ENCODE measurements at regions of chr4 and their contacts with region 1.

Region 1: DNA sequence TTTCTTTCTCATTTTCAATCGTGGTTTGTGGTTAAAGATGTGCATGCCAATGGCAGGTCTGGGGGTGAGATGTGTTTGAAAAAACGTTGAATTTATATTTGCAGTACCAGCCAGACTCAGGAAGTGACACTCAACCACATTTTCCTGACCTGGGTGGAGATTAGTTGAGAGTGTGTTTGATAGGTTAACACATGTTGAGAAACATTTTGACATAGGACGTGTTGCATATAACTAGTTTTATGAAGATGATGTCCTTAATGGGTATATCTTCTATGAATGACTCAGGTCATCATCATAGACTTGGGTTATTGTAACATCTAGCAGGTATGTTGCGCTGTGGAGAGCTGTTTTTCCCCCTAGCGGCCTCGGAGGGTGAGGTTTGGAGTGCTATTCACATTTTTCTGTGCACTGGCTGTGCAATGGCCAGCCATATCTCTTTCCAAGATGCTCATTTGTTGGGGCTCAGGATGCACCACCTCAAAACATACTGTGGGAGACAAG is 21.7 kb upstream of the CD38 start:
- DNase-seq: peak; percentile 82
- H3K4me3 Mint-ChIP-seq: peak overlapping the region; percentile 85
- H3K27ac Mint-ChIP-seq: peak overlapping the region; percentile 99
- H3K4me1 Mint-ChIP-seq: peaks cover 71% of the 10 kb centered on the region
- H3K27me3 Mint-ChIP-seq: no peaks in the 10 kb centered on the region

Region 2: GRCh38 chr4:15428611-15429010 is 327.8 kb before region 1 on chr4:
- CTCF ChIA-PET with region 1: no interaction called
- DNase-seq: no peak
- H3K4me3 Mint-ChIP-seq: no peak overlapping the region
- H3K27ac Mint-ChIP-seq: no peak overlapping the region
- H3K4me1 Mint-ChIP-seq: peaks cover 17% of the 10 kb centered on the region
- H3K27me3 Mint-ChIP-seq: no peaks in the 10 kb centered on the region

Region 3: DNA sequence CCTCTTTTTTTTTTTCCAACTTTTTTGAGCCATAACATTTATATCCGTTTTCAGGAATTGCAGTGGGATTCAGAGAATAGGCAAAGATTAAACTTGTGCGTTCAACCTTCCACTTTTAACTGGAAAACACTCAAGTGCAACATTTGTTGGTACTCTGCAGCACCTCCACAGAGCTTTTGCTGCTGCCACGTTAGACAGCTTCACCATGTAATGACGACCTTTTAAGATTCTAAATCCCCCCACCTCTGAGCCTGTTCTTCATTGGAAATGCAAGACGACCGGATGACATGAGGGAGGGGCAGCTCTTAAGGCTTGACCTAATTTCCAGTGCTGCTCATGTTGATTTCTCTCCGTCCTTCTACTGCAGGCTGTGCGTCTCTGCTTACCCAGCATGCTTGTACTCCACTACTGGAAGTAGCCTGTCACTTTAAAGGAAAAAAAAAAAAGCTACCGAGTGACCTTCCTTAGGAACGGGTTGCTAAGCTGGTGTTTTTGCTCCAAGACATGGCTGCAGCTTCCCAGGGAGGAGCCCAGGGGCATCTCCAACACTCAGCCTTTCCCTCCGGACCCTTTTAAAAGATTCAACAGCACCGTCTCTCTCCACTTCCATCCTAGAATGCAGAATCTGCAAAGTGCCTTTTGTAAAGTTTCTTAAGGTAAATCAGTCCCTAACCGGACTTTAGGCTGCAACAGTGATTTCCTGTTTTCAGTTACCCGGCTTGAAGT is 286.8 kb before region 1 on chr4 and contains the start of gene CC2D2A:
- CTCF ChIA-PET with region 1: no interaction called
- DNase-seq: no peak
- H3K4me3 Mint-ChIP-seq: no peak within 1 kb of the TSS
- H3K27ac Mint-ChIP-seq: no peak within 1 kb of the TSS
- H3K4me1 Mint-ChIP-seq: peaks cover 12% of the 10 kb centered on the region
- H3K27me3 Mint-ChIP-seq: peaks cover 4% of the 10 kb centered on the region

Region 4: GRCh38 chr4:15771216-15772058 is 15.0 kb after region 1 on chr4:
- CTCF ChIA-PET with region 1: interaction called, 53 read pairs
- DNase-seq: peak; percentile 39
- H3K4me3 Mint-ChIP-seq: peak overlapping the region; percentile 5
- H3K27ac Mint-ChIP-seq: peak overlapping the region; percentile 68
- H3K4me1 Mint-ChIP-seq: peaks cover 74% of the 10 kb centered on the region
- H3K27me3 Mint-ChIP-seq: peaks cover 25% of the 10 kb centered on the region

Region 5: GRCh38 chr4:15778289-15779241 is 22.2 kb after region 1 on chr4 and contains the start of gene CD38:
- CTCF ChIA-PET with region 1: interaction called, 53 read pairs
- DNase-seq: peak; percentile 79
- H3K4me3 Mint-ChIP-seq: peak within 1 kb of the TSS; percentile 85
- H3K27ac Mint-ChIP-seq: peak within 1 kb of the TSS; percentile 90
- H3K4me1 Mint-ChIP-seq: peaks cover 71% of the 10 kb centered on the region
- H3K27me3 Mint-ChIP-seq: peaks cover 20% of the 10 kb centered on the region